AG04450 (cell line): ENCODE measurements at regions of chr5 and their contacts with region 1.

Region 1: DNA sequence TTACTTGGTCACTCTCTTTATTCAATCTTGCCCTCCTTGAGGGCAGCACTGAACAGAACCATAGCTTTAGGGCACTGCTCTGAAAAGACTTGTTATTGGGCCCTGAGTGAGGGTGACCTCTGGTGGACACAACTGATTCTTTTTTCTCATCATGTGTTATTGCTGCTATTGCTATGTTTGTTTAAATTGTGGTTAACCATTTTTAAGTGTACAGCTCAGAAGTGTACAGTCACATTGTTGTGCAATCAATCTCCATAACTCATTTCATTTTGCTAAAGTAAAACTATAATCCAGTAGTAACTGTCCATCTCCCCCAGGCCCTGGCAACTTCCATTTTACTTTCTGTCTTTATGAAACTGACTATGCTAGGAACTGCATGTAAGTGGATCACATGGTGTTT is 351.1 kb upstream of the RIOK2 start:
- DNase-seq: peak; percentile 84
- H3K4me3 ChIP-seq: no peak overlapping the region
- H3K27ac ChIP-seq: no peak overlapping the region
- H3K27me3 ChIP-seq: no peaks in the 10 kb centered on the region
- CTCF ChIP-seq: peak; percentile 76

Region 2: GRCh38 chr5:97499605-97500004 is 34.6 kb before region 1 on chr5:
- CTCF ChIA-PET with region 1: interaction called, 10 read pairs
- POLR2A ChIA-PET with region 1: no interaction called
- DNase-seq: no peak
- H3K4me3 ChIP-seq: no peak overlapping the region
- H3K27ac ChIP-seq: no peak overlapping the region
- H3K27me3 ChIP-seq: no peaks in the 10 kb centered on the region
- CTCF ChIP-seq: no peak

Region 3: GRCh38 chr5:97550164-97550563 is 16.0 kb after region 1 on chr5:
- CTCF ChIA-PET with region 1: interaction called, 19 read pairs
- POLR2A ChIA-PET with region 1: no interaction called
- DNase-seq: no peak
- H3K4me3 ChIP-seq: no peak overlapping the region
- H3K27ac ChIP-seq: no peak overlapping the region
- H3K27me3 ChIP-seq: no peaks in the 10 kb centered on the region
- CTCF ChIP-seq: no peak

Region 4: DNA sequence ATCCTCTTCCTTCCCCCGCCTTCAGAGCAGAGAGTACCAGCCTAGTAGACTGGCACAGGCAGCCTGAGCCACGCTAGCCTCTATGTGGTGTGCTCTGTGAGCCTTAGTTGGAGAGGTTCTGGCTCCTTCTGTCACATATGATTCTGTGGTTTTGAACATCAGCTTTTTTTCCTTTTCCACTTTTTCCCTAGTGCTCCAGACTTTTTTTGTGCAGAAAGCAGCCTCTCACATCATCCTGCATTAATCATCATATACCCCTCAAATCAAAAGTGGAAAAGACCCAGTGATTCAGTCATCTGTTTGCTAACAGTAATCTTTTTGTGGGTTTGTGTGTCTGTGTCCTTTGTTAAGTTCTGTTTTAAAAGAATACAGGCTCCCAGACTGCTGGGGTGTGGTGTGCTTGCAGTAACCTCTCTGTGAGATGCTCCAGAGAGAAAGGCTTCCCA is 575.4 kb after region 1 on chr5:
- CTCF ChIA-PET with region 1: interaction called, 10 read pairs
- POLR2A ChIA-PET with region 1: no interaction called
- DNase-seq: peak; percentile 51
- H3K4me3 ChIP-seq: peak overlapping the region; percentile 20; the same call in 1 of the 2 replicates
- H3K27ac ChIP-seq: peak overlapping the region; percentile 96
- H3K27me3 ChIP-seq: no peaks in the 10 kb centered on the region
- CTCF ChIP-seq: no peak

Region 5: DNA sequence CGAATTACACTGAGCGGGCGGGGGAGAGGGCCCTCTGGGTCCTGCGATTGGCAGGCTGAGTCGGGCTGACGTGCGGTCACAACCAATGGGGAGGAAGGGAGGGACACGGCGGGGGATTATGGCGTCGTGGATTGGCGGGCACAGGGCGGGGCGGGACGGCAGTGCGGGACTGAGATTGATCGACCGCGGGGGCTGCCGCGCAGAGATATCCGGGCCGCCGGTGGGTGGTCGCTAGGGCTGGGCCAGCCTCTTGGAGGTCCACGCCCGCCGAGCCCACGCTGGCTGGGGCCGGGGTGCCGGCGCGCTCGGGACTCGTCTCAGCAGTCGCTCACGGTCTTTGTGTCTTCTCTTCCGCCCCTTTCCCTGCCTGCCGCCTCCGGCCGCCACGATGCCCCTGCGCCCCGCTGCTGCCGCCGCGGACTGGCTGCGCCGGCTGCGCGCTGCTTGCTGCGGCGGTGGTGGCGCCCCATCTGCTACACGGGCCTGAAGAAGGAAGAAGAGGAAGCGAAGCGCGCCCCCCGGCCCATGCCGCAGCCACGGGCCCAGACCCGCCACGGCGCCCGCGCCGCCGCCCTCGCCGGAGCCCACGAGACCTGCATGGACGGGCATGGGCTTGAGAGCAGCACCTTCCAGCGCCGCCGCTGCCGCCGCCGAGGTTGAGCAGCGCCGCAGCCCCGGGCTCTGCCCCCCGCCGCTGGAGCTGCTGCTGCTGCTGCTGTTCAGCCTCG is 1239.5 kb after region 1 on chr5 and contains the start of gene RGMB:
- CTCF ChIA-PET with region 1: interaction called, 10 read pairs
- POLR2A ChIA-PET with region 1: interaction called, 9 read pairs
- DNase-seq: peak; percentile 99
- H3K4me3 ChIP-seq: peak within 1 kb of the TSS; percentile 92
- H3K27ac ChIP-seq: peak within 1 kb of the TSS; percentile 83
- H3K27me3 ChIP-seq: no peaks in the 10 kb centered on the region
- CTCF ChIP-seq: no peak
- polyA plus RNA-seq, gene RGMB: 53.6 and 57.7 TPM in 2 replicates